GM18951 (cell line): ENCODE measurements at regions of chr17 and their contacts with region 1.

Region 1: DNA sequence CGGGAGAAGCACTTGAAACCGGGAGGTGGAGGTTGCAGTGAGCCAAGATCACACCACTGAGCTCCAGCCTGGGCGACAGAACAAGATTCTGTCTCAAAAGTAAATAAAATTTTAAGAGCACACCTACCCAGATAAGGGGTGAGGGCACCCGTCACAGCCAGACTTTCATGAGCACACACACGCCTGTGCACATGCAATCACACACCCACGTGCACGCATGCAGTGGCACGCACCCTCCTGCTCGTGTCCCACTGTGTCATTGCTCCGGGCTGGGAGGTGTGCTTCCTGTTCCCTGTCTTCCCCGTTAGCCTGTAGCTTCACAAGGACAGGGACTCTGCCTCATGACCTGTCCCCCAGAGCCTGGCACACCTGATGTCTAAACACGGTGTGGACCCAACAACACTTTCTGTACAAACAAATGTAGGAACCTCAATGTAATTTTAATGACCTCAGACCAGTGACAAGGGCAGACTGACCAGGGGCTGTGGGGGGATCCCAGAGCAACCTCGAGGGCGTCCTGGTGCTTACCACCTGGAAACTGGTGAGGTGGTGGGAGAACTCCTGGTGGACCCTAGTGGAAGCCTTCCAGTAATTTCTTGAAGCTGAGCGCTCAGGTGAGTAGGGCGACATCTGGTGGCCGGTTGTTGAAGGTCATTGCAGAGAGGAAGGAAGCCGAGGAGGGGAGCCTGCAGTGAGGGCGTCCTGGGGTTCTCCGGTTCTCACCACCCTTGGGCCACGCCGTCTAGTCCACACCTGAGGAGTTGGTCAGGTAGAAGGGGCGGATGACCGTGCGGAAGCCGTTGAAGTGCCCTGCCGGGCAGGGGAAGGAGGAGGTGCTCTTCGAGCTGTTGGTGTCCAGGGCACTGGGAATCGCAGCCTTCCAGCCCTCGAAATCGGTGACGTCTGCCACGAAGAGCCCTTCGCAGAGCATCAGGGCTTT is 8.6 kb downstream of the LGALS3BP start:
- POLR2A ChIP-seq: no peak

Region 2: DNA sequence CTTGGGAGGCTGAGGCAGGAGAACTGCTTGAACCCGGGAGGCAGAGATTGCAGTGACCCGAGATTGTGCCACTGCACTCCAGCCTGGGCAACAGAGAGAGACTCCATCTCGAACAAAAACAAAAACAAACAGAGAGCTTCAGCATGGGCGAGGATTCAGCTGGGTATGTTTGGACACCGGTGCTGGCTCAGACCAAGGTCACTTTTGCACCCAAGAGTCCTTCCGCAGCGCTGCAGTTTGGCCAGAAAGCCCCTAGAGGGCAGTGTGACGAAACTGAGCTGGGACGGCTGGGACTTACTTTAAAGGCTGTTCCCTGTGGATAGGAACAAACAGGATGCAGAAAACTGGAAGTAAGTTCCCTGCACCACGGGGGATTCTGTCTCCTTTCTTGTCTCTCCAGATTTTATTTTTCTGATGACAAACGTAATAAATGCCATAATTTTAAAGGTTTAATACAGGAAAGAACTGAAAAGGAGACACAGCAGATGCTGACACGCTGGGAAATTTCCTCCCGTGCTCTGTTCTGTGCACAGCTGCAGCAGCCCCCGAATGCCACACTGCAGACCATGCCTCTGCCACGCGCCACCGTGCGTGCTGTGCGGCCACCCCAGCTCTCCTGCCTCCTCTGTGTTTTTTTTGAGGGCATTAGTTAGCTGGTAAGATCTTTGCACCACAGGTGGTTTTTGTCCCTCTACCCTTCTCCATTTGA is 105.3 kb before region 1 on chr17:
- in situ Hi-C with region 1: loop called (anchors 10 kb)
- POLR2A ChIP-seq: no peak

Region 3: GRCh38 chr17:79095345-79096055 is 124.4 kb after region 1 on chr17:
- in situ Hi-C with region 1: no loop called
- POLR2A ChIP-seq: no peak